ENCODE measurements at regions of chr17 and their contacts with region 1.

Region 1: GRCh38 chr17:9402590-9403199 is 172.9 kb downstream of the STX8 start:
- DNase-seq: peak; percentile 23 to 76
- H3K4me3 ChIP-seq: no peak overlapping the region
- H3K27ac ChIP-seq: no peak overlapping the region
- H3K4me1 ChIP-seq: peaks cover 0 to 2% (median 0%) of the 10 kb centered on the region in 4 experiments; a peak in 3 of 7 replicates
- H3K27me3 ChIP-seq: no peaks in the 10 kb centered on the region
- CTCF ChIP-seq: peak in 2 of 3 experiments; percentile 64 to 75; a peak in 3 of 4 replicates
- EP300 ChIP-seq: no peak
- POLR2A ChIP-seq: no peak
- RAD21 ChIP-seq: peak; percentile 65 to 79

Region 2: DNA sequence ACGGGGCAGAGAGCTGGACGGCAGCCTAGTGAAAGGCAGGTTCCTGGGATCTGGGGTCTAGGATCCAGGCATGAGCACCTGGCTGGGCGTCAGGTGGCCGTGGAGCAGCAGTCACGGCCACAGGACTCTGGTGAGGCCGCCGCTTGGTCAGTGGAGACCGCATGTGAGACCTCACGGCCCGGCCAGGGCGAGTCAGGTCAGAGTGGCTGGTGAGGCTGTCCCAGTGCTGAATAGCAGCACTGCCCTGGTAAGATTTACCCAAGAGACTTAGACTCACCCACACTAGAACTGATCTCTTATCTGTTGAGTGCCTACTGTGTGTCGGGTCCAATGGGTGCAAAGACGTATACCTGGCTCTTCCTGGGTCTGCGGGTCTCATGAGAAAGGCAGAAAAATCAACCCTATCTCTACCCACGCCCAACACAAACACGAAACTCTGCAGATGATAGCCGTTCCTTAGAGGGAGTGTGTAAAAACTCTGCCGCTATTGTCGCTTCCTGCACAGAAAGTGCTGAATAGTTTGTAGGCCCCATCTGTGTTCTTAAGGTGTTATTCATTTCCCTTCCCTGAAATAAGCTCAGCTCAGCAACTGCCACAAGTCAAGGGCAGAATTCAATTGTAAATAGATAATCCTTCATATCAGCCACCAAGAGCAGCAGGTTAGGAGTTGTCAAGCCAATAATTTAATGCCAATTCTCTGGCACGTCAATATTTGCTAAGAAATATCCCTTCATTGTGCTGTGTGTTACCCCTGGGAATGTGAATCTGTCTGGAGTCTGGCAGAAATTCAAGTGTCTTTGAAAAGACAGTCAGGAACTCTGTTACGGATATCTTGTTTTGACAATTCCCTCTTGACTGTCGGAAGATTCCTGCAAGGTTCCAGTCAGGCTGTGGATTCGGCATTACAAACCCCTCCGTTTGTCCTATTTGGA is 141.3 kb before region 1 on chr17:
- CTCF ChIA-PET with region 1: no interaction called
- POLR2A ChIA-PET with region 1: no interaction called
- DNase-seq: no peak
- H3K4me3 ChIP-seq: no peak overlapping the region
- H3K27ac ChIP-seq: no peak overlapping the region
- H3K4me1 ChIP-seq: peaks cover 0 to 8% (median 2%) of the 10 kb centered on the region in 4 experiments; a peak in 4 of 7 replicates
- H3K27me3 ChIP-seq: peaks cover 0 to 1% (median 0%) of the 10 kb centered on the region in 4 experiments; a peak in 2 of 7 replicates
- CTCF ChIP-seq: no peak
- EP300 ChIP-seq: no peak
- POLR2A ChIP-seq: no peak
- RAD21 ChIP-seq: no peak

Region 3: GRCh38 chr17:9381060-9381459 is 21.6 kb before region 1 on chr17:
- CTCF ChIA-PET with region 1: no interaction called
- POLR2A ChIA-PET with region 1: no interaction called
- DNase-seq: no peak
- H3K4me3 ChIP-seq: no peak overlapping the region
- H3K27ac ChIP-seq: no peak overlapping the region
- H3K4me1 ChIP-seq: no peaks in the 10 kb centered on the region
- H3K27me3 ChIP-seq: no peaks in the 10 kb centered on the region
- CTCF ChIP-seq: no peak
- EP300 ChIP-seq: no peak
- POLR2A ChIP-seq: no peak
- RAD21 ChIP-seq: no peak

Region 4: GRCh38 chr17:9414471-9414870 is 11.8 kb after region 1 on chr17:
- CTCF ChIA-PET with region 1: interaction called, 11 read pairs
- POLR2A ChIA-PET with region 1: no interaction called
- DNase-seq: no peak
- H3K4me3 ChIP-seq: no peak overlapping the region
- H3K27ac ChIP-seq: no peak overlapping the region
- H3K4me1 ChIP-seq: no peaks in the 10 kb centered on the region
- H3K27me3 ChIP-seq: no peaks in the 10 kb centered on the region
- CTCF ChIP-seq: no peak
- EP300 ChIP-seq: no peak
- POLR2A ChIP-seq: no peak
- RAD21 ChIP-seq: no peak